ENCODE measurements at regions of chr6 and their contacts with region 1.

Region 1: DNA sequence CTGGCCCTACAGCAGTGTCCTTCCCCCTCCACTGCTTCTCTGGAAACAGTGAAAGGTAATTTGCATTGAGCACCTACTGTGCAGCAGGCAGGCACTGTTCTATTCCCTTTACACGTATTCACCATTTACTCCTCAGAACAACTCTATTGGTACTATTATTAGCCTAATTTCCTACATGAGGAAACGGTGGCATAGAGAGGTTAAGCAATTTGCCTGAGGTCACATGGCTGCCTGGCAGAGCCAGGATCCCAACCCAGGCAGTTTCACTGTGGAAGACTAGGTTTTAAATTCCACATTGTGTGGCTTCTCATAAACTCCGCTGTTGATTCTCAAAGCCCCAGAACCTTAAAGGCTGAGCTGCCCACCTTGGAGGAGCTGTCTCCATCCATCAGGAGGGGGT is 72.7 kb downstream of the CLIC5 start:
- DNase-seq: no peak
- H3K4me3 ChIP-seq: no peak overlapping the region
- H3K27ac ChIP-seq: no peak overlapping the region
- H3K4me1 ChIP-seq: no peaks in the 10 kb centered on the region
- H3K27me3 ChIP-seq: no peaks in the 10 kb centered on the region
- CTCF ChIP-seq: no peak

Region 2: GRCh38 chr6:45495429-45496084 is 447.4 kb before region 1 on chr6:
- CTCF ChIA-PET with region 1: no interaction called
- POLR2A ChIA-PET with region 1: no interaction called
- intact Hi-C with region 1: no loop called
- DNase-seq: no peak
- H3K4me3 ChIP-seq: no peak overlapping the region
- H3K27ac ChIP-seq: no peak overlapping the region
- H3K4me1 ChIP-seq: peaks cover 12% of the 10 kb centered on the region
- H3K27me3 ChIP-seq: no peaks in the 10 kb centered on the region
- CTCF ChIP-seq: no peak

Region 3: DNA sequence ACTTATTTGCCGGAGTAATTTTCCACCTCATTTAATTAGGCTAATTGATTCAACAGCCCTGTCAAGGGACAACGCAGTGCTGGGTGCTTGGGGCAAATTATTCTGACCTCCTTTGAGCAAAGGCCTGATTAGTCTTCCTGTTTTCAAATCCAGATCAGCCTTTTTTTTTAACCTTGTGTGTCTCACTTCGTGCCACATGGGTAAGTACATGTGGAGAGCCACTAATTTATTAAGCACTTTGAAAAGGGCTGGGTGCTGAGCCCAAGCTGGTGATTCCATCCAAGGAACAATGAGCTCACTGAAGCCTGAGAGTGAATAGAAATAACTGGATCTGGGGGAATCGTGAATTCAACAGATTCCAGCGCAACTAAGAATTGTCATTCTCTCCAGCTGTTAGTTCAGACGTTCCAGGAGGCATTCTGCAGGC is 156.6 kb before region 1 on chr6:
- CTCF ChIA-PET with region 1: no interaction called
- POLR2A ChIA-PET with region 1: no interaction called
- intact Hi-C with region 1: no loop called
- DNase-seq: no peak
- H3K4me3 ChIP-seq: no peak overlapping the region
- H3K27ac ChIP-seq: no peak overlapping the region
- H3K4me1 ChIP-seq: peaks cover 6% of the 10 kb centered on the region
- H3K27me3 ChIP-seq: no peaks in the 10 kb centered on the region
- CTCF ChIP-seq: no peak

Region 4: GRCh38 chr6:45916692-45917091 is 26.3 kb before region 1 on chr6:
- CTCF ChIA-PET with region 1: no interaction called
- POLR2A ChIA-PET with region 1: no interaction called
- intact Hi-C with region 1: no loop called
- DNase-seq: no peak
- H3K4me3 ChIP-seq: no peak overlapping the region
- H3K27ac ChIP-seq: no peak overlapping the region
- H3K4me1 ChIP-seq: no peaks in the 10 kb centered on the region
- H3K27me3 ChIP-seq: no peaks in the 10 kb centered on the region
- CTCF ChIP-seq: no peak

Region 5: DNA sequence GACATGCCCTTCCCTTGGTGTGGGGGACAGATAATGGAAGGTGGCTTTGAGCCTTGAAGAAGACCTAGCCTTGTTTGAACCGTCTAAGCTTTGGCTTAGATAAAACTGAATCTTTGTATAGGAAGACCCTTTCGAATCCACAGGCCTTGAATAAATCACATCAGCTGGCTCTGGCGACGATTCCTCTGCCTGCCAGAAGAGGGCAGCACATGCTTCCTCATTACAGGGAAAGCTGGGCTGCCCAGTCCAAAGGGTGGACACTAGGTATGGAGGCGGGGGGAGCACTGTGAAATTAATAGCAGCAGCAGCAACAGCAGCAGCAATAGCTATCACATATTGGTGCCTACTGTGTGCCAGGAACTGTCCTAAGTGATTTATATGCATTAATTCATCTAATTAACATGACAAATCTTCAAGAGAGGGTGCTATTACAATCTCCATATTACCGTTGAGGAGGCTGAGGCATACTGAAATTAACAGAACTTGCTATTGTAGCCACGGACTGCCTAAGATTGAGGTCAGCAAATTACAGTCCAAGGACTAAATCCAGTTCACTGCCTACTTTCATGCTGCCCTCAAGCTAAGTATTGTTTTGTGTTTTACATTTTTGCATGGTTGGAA is 12.4 kb before region 1 on chr6:
- CTCF ChIA-PET with region 1: interaction called, 35 read pairs
- POLR2A ChIA-PET with region 1: no interaction called
- intact Hi-C with region 1: no loop called
- DNase-seq: peak; percentile 68
- H3K4me3 ChIP-seq: no peak overlapping the region
- H3K27ac ChIP-seq: no peak overlapping the region
- H3K4me1 ChIP-seq: no peaks in the 10 kb centered on the region
- H3K27me3 ChIP-seq: no peaks in the 10 kb centered on the region
- CTCF ChIP-seq: peak; percentile 99

Region 6: DNA sequence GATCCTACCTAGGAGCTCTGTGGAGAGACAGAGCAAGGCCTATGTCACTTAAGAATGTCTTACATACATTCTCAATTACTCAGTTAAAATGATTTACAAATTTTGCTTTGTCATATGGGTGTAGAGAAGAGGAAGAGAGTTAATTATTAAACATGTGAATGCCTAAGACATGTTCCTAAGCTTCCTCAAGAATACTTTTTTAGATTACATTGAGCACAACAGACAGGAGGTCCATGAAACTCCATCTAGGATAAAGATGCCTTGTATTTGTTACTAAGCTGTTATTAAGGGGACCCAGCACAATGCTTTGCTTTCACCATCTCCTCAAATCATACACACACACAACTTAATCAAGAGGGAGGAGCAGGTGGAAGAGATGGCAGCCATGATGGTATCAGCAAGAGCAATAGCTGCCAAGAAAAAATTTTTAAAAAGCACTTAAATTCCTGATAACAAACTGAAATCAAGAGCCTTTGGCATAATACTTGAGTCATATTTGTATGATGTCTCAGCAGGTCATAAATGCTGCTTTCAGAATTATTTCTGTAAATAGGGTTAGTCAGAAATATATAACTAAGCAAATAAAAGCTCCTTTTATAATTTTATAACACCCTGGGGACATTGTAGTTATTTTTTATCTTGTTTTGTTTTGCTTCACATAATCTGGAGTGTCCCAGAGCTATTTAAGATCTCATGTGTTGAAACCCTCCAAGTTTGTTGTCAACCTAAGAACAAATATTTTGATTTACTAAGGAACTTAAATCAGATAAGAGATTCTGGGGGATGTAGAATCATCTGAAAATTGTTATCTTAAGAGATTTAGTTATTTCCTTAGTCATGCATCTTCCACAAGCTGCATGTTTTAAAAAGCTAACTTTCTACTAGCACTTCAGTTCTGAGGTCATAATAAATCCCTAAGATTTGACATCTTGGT is 1464.7 kb after region 1 on chr6:
- CTCF ChIA-PET with region 1: no interaction called
- POLR2A ChIA-PET with region 1: no interaction called
- intact Hi-C with region 1: no loop called
- DNase-seq: no peak
- H3K4me3 ChIP-seq: no peak overlapping the region
- H3K27ac ChIP-seq: no peak overlapping the region
- H3K4me1 ChIP-seq: no peaks in the 10 kb centered on the region
- H3K27me3 ChIP-seq: no peaks in the 10 kb centered on the region
- CTCF ChIP-seq: no peak

Measured in A673 (cell line).